ENCODE measurements at regions of chr9 and their contacts with region 1.

Region 1: DNA sequence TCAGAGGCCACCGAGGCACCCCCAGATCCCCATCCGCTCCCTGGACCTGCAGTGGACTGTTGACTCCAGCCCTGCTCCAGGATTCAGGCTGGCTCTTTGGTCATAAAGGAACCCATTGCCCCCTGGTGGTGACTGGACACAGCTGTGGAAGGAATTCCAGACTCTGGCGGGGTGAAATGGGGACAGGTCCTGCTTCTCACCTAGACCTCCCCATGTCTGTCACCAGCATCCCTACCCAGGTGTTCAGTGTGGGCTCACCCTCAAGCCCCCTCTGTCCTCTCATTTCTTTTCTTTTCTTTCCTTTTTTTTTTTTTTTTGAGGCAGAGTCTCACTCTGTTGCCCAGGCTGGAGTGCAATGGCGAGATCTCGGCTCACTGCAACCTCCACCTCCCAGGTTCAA is 25.5 kb upstream of the STXBP1 start:
- DNase-seq: peak; percentile 65 to 89
- ATAC-seq: peak; percentile 88 to 93 (median 90)
- H3K4me3 ChIP-seq: no peak overlapping the region
- H3K27ac ChIP-seq: no peak overlapping the region
- H3K4me1 ChIP-seq: peaks cover 0 to 23% (median 3%) of the 10 kb centered on the region in 9 donors
- H3K27me3 ChIP-seq: no peaks in the 10 kb centered on the region
- CTCF ChIP-seq: peak; percentile 82 to 89 (median 87)

Region 2: GRCh38 chr9:127503947-127504782 is 82.4 kb before region 1 on chr9:
- intact Hi-C with region 1: loop called (anchors 1 to 2 kb)
- DNase-seq: peak; percentile 81 to 88
- ATAC-seq: peak; percentile 71 to 91 (median 86)
- H3K4me3 ChIP-seq: no peak overlapping the region
- H3K27ac ChIP-seq: peak overlapping the region in 3 of 10 donors; percentile 8 to 41 (median 20)
- H3K4me1 ChIP-seq: peaks cover 0 to 13% (median 3%) of the 10 kb centered on the region in 9 donors
- H3K27me3 ChIP-seq: no peaks in the 10 kb centered on the region
- CTCF ChIP-seq: peak; percentile 79 to 96 (median 89)

Region 3: GRCh38 chr9:127525401-127526187 is 60.9 kb before region 1 on chr9:
- intact Hi-C with region 1: loop called in 2 of 10 experiments (anchors 5 kb)
- DNase-seq: peak in 1 of 2 donors; percentile 26
- ATAC-seq: peak in 3 of 8 donors; percentile 28 to 72 (median 32)
- H3K4me3 ChIP-seq: no peak overlapping the region
- H3K27ac ChIP-seq: peak overlapping the region; percentile 33 to 94 (median 47)
- H3K4me1 ChIP-seq: peaks cover 30 to 94% (median 65%) of the 10 kb centered on the region in 9 donors
- H3K27me3 ChIP-seq: no peaks in the 10 kb centered on the region
- CTCF ChIP-seq: peak; percentile 10 to 70 (median 50)

Region 4: DNA sequence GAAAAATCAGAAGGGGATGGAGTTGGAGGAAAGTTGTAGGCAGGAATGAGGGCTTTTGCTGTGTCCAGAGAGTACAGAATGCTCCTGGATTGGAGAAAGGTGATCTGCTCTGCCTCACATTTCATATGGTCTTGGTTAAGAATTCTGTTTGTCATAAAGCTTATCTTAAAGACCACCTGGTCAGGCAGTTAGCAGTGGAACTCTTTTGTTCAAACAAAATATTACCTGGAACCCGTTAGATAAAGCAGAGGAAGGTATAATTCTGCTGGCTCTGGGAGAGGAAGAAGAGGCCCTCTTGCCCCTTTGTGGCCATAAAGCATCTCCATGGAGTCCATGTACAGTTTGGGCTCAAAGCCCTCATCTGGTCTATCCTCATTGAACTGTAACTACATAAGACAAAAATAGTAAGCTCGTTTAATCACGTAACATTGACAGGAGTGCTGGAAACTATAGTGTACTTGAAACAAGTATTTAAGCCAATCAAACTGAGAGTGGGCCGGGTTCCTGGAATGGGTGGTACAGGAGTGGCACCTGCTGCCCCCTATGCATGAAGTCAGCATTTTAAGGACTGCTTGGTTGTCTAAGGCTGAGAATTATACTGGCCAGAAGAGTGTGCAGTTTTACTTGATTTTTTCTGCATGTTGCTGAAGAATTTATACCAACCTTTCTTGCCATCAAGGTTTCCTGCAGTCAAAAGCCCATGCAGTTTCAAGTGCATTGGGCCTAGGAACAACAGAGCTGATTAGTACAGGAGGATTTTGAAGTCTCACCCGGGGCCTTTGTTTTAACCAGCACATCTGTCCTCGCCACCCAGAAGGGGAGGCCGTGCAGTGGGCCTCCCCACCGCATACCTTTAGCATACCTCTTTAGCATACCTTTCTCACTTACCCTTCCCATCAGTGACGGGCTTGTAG is 65.4 kb after region 1 on chr9:
- intact Hi-C with region 1: loop called in 1 of 10 experiments (anchors 10 kb)
- DNase-seq: no peak
- ATAC-seq: peak in 5 of 8 donors; percentile 8 to 70 (median 57)
- H3K4me3 ChIP-seq: no peak overlapping the region
- H3K27ac ChIP-seq: peak overlapping the region in 2 of 10 donors; percentile 40 to 44
- H3K4me1 ChIP-seq: peaks cover 0 to 17% (median 0%) of the 10 kb centered on the region in 9 donors
- H3K27me3 ChIP-seq: no peaks in the 10 kb centered on the region
- CTCF ChIP-seq: peak in 3 of 9 donors; percentile 3 to 15 (median 14)

Region 5: DNA sequence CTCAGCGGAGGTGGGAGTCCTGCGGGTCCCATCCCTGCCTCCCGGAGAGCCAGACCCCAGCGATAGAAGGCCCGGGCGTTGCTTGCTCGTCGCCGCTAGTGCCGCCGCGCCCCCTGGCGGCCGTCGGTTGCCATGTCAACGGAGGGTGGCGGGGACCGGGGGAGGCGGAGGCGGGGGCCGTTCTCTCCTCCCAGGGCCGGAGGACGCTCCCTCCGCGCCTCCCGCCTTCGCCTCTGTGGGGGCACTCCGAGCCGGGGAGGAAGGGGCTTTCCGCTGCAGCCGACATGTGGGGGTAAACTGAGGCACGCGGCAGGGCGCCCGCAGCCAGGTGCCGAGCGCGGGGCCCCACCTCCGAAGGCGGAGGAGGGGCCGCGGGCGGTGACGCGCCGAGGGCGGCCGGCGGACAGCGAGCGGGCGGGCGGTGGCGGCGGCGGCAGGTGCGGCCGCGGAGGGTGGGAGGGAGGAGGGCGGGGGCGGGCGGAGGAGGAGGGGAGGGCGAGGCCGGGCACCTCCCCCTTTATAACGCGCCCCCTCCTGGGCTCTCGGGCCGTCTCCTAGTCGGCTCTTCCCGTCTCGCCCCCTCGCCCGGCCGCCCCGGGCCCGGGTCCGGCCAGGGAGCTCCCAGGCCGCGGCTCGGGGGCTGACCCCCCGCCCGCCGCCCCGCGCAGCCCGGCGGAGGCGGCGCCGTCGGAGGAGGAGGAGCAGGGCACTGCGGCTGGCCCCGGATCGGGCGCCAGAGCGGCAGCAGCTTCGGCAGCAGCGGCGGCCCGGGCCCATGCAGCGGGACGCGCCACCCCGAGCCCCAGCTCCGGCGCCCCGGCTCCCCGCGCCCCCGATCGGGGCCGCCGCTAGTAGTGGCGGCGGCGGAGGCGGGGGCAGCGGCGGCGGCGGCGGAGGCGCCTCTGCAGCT is 198.7 kb after region 1 on chr9:
- intact Hi-C with region 1: loop called in 2 of 10 experiments (anchors 5 kb)
- DNase-seq: peak; percentile 89 to 92
- ATAC-seq: peak; percentile 62 to 78 (median 70)
- H3K4me3 ChIP-seq: peak overlapping the region; percentile 19 to 100 (median 97)
- H3K27ac ChIP-seq: peak overlapping the region; percentile 88 to 99 (median 98)
- H3K4me1 ChIP-seq: peaks cover 9 to 82% (median 52%) of the 10 kb centered on the region in 9 donors
- H3K27me3 ChIP-seq: no peaks in the 10 kb centered on the region
- CTCF ChIP-seq: peak; percentile 90 to 96 (median 92)

Region 6: GRCh38 chr9:127916665-127917613 is 330.4 kb after region 1 on chr9 and contains the start of gene ST6GALNAC4:
- intact Hi-C with region 1: loop called (anchors 1 to 5 kb)
- DNase-seq: peak; percentile 94 to 96
- ATAC-seq: peak; percentile 91 to 97 (median 94)
- H3K4me3 ChIP-seq: peak within 1 kb of the TSS; percentile 64 to 96 (median 76)
- H3K27ac ChIP-seq: peak within 1 kb of the TSS in 9 of 10 donors; percentile 40 to 79 (median 77)
- H3K4me1 ChIP-seq: peaks cover 10 to 61% (median 49%) of the 10 kb centered on the region in 9 donors
- H3K27me3 ChIP-seq: peaks cover 0 to 3% (median 0%) of the 10 kb centered on the region in 7 donors
- CTCF ChIP-seq: no peak
- total RNA-seq, gene ST6GALNAC4: 23.2 to 52.9 (median 33.9) TPM